Pancreas (tissue), 10 donors: ENCODE measurements at regions of chr19 and their contacts with region 1.

Region 1: DNA sequence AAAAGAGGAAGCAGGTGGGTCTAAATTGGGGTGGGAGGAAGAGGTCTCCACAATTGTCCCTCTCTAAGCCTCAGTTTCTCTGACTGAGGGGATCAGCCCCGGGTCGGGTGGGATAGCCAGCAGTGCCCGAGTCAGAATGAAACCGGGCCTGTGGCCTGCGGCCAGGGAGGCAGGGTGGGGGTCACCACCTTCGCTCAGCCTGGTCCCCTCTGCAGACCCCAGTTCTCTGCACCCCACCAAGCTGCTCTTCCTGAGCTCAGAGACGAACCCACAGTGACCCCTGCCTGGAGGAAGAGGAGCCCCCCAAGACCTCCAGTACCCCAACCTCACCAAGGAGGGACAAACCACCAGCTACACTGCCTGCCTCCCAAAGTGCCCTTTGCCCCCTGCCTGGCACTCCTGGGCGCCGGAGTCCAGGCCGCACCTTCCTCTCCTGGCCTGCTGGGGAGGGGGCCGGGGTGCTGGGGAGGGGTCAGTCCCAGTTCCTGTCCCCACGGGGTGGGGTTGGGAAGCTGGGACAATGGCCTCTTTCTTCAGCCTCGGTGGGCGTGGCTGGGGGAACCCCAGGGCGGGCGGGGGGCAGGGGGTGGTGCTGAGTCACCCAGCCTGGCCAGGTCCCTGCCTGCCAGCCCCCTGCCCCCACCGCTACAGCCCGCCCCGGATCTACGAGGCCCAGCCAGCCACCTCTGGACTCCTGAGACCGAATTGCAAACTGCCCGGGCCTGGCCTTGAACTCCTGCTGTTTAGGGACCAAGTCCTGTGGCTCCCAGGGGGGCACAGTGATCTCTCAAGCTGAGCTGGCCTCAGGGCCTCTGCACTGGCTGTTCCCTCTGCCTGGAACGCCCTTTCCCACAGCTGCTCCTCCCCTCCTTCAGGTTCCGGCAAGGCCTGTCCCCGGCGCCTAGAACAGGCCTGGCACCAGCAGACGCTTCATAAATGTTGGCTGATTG is 14.4 kb downstream of the ZBTB7A start:
- DNase-seq: peak; percentile 62 to 85 (median 72)
- ATAC-seq: peak; percentile 59 to 78 (median 74)
- H3K4me3 ChIP-seq: no peak overlapping the region
- H3K27ac ChIP-seq: peak overlapping the region; percentile 36 to 75 (median 58)
- H3K4me1 ChIP-seq: peaks cover 0 to 6% (median 0%) of the 10 kb centered on the region in 3 donors
- H3K27me3 ChIP-seq: no peaks in the 10 kb centered on the region
- CTCF ChIP-seq: no peak

Region 2: GRCh38 chr19:4014541-4015491 is 37.5 kb before region 1 on chr19:
- intact Hi-C with region 1: loop called in 1 of 3 experiments (anchors 5 kb)
- DNase-seq: peak in 5 of 6 donors; percentile 59 to 86 (median 69)
- ATAC-seq: peak; percentile 4 to 58 (median 38)
- H3K4me3 ChIP-seq: peak overlapping the region in 1 of 4 donors; percentile 1
- H3K27ac ChIP-seq: peak overlapping the region; percentile 14 to 59 (median 40)
- H3K4me1 ChIP-seq: peaks cover 31 to 56% (median 54%) of the 10 kb centered on the region in 3 donors
- H3K27me3 ChIP-seq: no peaks in the 10 kb centered on the region
- CTCF ChIP-seq: no peak